ENCODE measurements at regions of chr11 and their contacts with region 1.

Region 1: GRCh38 chr11:15801616-15802015 is 554.7 kb downstream of the SOX6 start:
- DNase-seq: no peak
- ATAC-seq: no peak
- H3K4me3 ChIP-seq: no peak overlapping the region
- H3K27ac ChIP-seq: no peak overlapping the region
- H3K4me1 ChIP-seq: peaks cover 11% of the 10 kb centered on the region
- H3K27me3 ChIP-seq: no peaks in the 10 kb centered on the region
- CTCF ChIP-seq: no peak
- POLR2A ChIP-seq: no peak
- RAD21 ChIP-seq: no peak

Region 2: GRCh38 chr11:15690320-15690719 is 111.3 kb before region 1 on chr11:
- CTCF ChIA-PET with region 1: no interaction called
- POLR2A ChIA-PET with region 1: interaction called, 10 read pairs
- dilution Hi-C with region 1: no loop called
- in situ Hi-C with region 1: no loop called
- intact Hi-C with region 1: no loop called
- DNase-seq: no peak
- ATAC-seq: no peak
- H3K4me3 ChIP-seq: no peak overlapping the region
- H3K27ac ChIP-seq: no peak overlapping the region
- H3K4me1 ChIP-seq: no peaks in the 10 kb centered on the region; the same call in 1 of the 2 replicates
- H3K27me3 ChIP-seq: no peaks in the 10 kb centered on the region
- CTCF ChIP-seq: no peak
- POLR2A ChIP-seq: no peak
- RAD21 ChIP-seq: no peak

Measured in IMR-90 (cell line).